ENCODE measurements at regions of chr1 and their contacts with region 1.

Region 1: DNA sequence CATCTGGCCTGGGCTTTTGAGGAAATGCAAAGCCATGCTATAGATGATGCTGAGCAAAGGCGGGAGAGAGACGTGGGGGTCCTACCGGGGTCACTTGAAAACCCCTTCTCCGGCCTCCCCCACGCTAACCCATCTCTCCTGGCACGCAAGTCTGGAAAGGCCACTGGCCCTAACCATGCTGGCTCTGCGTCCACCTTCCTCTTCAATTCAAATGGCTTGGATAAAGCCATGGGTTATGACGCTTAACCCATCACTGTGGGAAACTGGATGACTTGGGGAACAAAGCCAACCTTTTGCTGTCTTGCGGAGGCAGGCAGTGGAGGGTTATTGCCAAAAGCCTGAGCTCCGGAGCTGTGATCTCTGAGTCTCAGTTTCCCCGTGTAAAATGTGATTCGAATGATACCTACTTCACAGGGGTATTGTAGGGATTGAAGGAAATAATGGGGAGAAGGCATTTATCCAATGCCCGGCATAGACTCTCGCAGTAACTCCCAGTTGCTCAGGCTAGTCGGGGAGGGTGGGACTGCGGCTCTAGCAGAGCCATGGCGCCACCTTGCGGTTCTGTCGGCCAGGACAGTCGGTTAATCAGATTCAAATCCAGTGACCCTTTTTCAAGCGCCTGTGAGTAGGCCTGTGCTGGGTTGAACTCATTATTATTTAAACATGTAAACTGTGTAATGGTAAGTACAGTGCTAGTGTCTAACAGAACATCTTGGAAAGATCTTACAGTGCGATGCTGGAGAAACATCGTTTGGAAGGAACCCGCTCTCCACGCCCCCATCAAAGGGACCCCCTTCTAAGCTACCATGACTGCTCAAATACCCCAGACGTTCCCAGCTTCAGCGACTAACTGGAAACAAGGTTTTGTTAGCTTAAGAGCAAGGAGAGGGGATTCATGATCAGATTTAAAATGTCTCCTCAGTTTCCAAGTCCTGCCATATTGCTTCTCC is 20.3 kb downstream of the NEK2 start:
- DNase-seq: peak; percentile 96
- H3K4me3 ChIP-seq: peak overlapping the region in 1 of 2 donors; percentile 26
- H3K27ac ChIP-seq: no peak overlapping the region
- H3K4me1 ChIP-seq: no peaks in the 10 kb centered on the region
- H3K27me3 ChIP-seq: no peaks in the 10 kb centered on the region
- CTCF ChIP-seq: peak; percentile 81 to 90 (median 88)
- POLR2A ChIP-seq: no peak

Region 2: GRCh38 chr1:211335522-211336157 is 319.5 kb before region 1 on chr1:
- intact Hi-C with region 1: loop called (anchors 10 kb)
- DNase-seq: no peak
- H3K4me3 ChIP-seq: no peak overlapping the region
- H3K27ac ChIP-seq: no peak overlapping the region
- H3K4me1 ChIP-seq: peaks cover 13% of the 10 kb centered on the region
- H3K27me3 ChIP-seq: no peaks in the 10 kb centered on the region
- CTCF ChIP-seq: no peak
- POLR2A ChIP-seq: no peak

Region 3: GRCh38 chr1:211515090-211516023 is 139.8 kb before region 1 on chr1:
- intact Hi-C with region 1: loop called (anchors 5 kb)
- DNase-seq: peak; percentile 74
- H3K4me3 ChIP-seq: peak overlapping the region; percentile 43 to 53
- H3K27ac ChIP-seq: no peak overlapping the region
- H3K4me1 ChIP-seq: no peaks in the 10 kb centered on the region
- H3K27me3 ChIP-seq: no peaks in the 10 kb centered on the region
- CTCF ChIP-seq: peak; percentile 79 to 92 (median 87)
- POLR2A ChIP-seq: no peak

Region 4: DNA sequence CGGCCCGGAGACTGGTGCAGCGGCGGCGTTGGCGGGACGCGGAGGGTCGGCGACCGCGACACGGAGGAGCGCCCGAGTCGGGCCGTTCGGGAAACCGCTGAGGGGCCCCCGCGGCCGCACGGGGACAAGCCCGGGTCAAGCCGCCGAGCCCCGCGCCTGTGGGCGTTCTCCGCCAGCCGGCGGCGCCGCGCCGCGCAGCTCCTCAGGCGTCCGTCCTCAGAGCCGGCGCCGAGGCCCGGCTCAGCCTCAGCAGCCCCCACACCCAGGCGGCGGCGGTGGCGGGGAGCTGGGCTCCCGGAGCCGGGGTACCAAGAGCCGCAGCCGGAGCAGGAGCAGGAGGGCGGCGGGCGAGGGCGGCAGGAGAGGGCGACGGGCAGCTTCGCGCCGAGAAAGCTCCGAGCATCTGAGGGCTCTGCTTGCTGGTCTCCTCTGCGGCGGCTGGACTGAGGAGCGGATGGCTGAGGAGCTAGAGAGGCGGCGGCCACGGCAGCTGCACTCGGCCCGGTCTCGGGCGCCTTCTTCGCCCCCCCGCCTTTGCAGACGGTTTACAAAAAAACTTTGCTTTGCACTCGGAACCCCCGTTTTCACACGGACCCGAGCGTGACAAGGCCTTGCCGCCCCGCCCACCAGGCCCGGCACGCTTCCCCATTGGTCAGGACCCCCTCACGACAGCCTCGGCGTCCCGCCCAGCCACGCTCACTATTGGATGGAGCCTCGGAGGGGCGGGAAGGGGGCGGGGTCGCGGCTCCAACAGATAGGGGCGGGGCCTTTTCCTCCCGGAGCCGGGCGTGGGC is 76.3 kb before region 1 on chr1 and contains the start of gene SLC30A1:
- intact Hi-C with region 1: loop called (anchors 10 kb)
- DNase-seq: peak; percentile 100
- H3K4me3 ChIP-seq: peak within 1 kb of the TSS; percentile 95 to 97
- H3K27ac ChIP-seq: peak within 1 kb of the TSS; percentile 94 to 98
- H3K4me1 ChIP-seq: peaks cover 8% of the 10 kb centered on the region
- H3K27me3 ChIP-seq: no peaks in the 10 kb centered on the region
- CTCF ChIP-seq: no peak
- POLR2A ChIP-seq: peak; percentile 89
- total RNA-seq, gene SLC30A1: 29.4 to 33.3 TPM

Measured in testis (tissue), 5 donors.